ENCODE measurements at regions of chr6 and their contacts with region 1.

Region 1: GRCh38 chr6:2848851-2849250 is 7.2 kb upstream of the SERPINB1 start:
- DNase-seq: peak; percentile 82
- ATAC-seq: peak; percentile 54
- H3K4me3 Mint-ChIP-seq: peak overlapping the region; percentile 3
- H3K27ac Mint-ChIP-seq: peak overlapping the region; percentile 17
- H3K4me1 Mint-ChIP-seq: peaks cover 54% of the 10 kb centered on the region
- H3K27me3 Mint-ChIP-seq: no peaks in the 10 kb centered on the region

Region 2: DNA sequence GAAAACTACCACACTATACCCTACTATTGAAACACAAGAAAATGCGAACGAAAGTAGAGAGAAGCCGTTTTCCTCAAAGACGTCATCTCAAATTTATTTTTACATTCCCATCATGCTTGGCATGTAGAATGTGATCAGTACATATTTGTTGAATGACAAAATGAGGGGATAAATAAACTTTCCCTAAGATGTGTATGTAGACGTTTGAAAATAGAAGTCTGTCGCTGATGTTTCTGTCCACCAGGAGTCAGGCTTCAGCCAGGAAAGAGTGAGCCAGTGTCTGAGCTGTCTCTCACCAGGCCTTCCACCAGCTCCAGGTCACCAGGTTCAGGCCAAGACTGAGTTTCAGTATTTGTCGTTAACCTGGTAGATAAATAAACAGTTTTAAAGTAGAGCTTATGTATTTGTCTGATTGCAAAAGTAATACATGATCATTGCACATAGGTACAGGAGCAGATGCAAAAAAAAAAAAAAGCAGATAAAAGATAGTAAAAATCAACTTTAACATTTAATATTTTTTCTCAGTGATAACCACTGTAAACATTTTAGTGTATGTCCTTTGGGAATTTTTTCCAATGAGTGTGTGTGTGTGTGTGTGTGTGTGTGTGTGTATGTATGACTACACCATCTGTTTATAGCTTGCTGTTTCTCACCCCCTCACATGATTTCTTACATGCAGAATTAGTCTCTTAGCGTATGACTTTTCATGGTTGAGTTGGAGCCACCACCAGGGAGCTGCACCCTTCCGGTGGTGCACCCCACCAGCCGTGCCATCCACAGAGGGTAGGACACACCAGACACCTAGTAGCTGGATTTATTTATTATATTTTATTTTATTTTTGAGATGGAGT is 57.5 kb before region 1 on chr6:
- CTCF ChIA-PET with region 1: interaction called, 55 read pairs
- DNase-seq: peak; percentile 86
- ATAC-seq: peak; percentile 82
- H3K4me3 Mint-ChIP-seq: no peak overlapping the region
- H3K27ac Mint-ChIP-seq: peak overlapping the region; percentile 76
- H3K4me1 Mint-ChIP-seq: peaks cover 37% of the 10 kb centered on the region
- H3K27me3 Mint-ChIP-seq: no peaks in the 10 kb centered on the region

Region 3: DNA sequence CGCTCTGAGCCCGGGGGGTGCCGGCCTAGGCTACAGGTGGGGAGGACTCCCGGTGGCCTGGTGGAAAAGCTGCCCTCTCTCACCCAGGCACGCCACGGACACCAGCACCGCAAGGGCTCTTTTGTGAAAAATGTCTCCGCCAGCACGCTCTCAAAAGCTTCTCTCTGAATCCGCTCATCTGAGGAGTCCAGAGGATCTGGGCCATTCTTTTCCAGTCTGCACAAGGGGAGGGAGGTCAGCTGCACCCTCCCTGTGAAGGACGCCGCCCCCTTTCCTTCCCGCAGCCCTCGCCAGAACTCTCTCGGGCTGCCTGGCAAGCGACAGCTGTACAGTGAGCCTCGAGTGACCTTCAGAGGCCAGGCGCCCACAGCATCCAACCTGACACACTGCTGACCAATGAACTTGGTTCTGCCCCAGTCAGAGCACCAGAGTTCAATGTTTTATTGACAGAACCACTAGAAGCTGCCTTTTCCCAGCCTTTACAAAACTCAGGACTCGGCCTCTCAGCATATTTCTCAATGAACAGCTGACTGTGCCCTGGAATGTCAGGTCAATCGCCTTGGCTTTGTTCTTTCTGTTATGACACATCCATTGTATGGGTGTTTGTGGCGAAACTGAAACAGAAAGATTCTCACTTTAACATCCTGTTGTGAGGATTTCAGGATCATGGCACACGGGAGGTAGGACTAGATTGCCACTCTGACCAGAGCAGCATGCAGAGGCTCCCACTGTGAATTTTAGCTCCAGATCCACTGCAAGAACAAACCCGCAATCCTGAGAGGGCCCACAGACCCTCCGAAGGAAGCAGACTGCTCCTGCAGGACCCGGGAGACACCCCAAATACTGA is 27.6 kb after region 1 on chr6:
- CTCF ChIA-PET with region 1: interaction called, 13 read pairs
- DNase-seq: no peak
- ATAC-seq: peak; percentile 45
- H3K4me3 Mint-ChIP-seq: peak overlapping the region; percentile 76
- H3K27ac Mint-ChIP-seq: peak overlapping the region; percentile 92
- H3K4me1 Mint-ChIP-seq: peaks cover 77% of the 10 kb centered on the region
- H3K27me3 Mint-ChIP-seq: no peaks in the 10 kb centered on the region

Region 4: GRCh38 chr6:2900821-2901644 is 52.2 kb after region 1 on chr6:
- CTCF ChIA-PET with region 1: interaction called, 38 read pairs
- DNase-seq: no peak
- ATAC-seq: peak; percentile 6
- H3K4me3 Mint-ChIP-seq: peak overlapping the region; percentile 96
- H3K27ac Mint-ChIP-seq: peak overlapping the region; percentile 88
- H3K4me1 Mint-ChIP-seq: peaks cover 45% of the 10 kb centered on the region
- H3K27me3 Mint-ChIP-seq: no peaks in the 10 kb centered on the region

Region 5: GRCh38 chr6:2917065-2917464 is 68.2 kb after region 1 on chr6:
- CTCF ChIA-PET with region 1: interaction called, 96 read pairs
- DNase-seq: peak; percentile 14
- ATAC-seq: no peak
- H3K4me3 Mint-ChIP-seq: no peak overlapping the region
- H3K27ac Mint-ChIP-seq: no peak overlapping the region
- H3K4me1 Mint-ChIP-seq: peaks cover 16% of the 10 kb centered on the region
- H3K27me3 Mint-ChIP-seq: no peaks in the 10 kb centered on the region

Region 6: GRCh38 chr6:2940010-2940850 is 91.4 kb after region 1 on chr6:
- CTCF ChIA-PET with region 1: interaction called, 115 read pairs
- DNase-seq: peak; percentile 92
- ATAC-seq: peak; percentile 90
- H3K4me3 Mint-ChIP-seq: peak overlapping the region; percentile 73
- H3K27ac Mint-ChIP-seq: peak overlapping the region; percentile 99
- H3K4me1 Mint-ChIP-seq: peaks cover 56% of the 10 kb centered on the region
- H3K27me3 Mint-ChIP-seq: peaks cover 29% of the 10 kb centered on the region